ENCODE measurements at regions of chr22 and their contacts with region 1.

Region 1: DNA sequence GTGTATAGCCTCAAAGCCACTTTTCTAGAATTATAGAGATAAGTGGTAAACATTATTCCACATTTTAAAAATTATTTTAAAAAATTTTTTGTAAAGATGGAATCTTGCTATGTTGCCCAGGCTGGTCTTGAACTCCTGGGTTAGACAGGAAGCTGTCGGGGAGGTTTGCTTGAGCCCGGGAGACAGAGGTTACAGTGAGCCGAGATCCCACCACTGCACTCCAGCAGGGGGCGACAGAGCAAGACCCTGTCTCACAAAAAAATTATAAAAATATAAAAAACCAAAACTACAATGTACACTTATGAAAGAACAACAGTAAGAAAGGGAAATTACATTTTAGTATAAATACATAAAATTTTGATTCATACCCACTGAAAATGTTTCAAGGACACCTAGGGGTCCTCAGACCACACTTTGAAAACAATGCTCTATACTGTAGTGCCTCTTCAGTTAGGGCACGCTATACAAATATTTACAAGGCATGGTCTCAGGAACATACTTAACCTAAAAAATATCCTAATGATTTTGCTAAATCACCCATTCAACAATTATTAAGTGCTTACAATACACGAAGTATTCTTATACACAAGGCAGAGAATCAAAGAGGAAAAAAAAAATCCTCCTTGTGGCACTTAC is 111.2 kb downstream of the MRTFA start:
- DNase-seq: no peak
- H3K4me3 ChIP-seq: no peak overlapping the region
- H3K27ac ChIP-seq: no peak overlapping the region
- H3K4me1 ChIP-seq: peaks cover 9% of the 10 kb centered on the region
- H3K27me3 ChIP-seq: no peaks in the 10 kb centered on the region
- CTCF ChIP-seq: peak; percentile 19 to 59 (median 29)
- POLR2A ChIP-seq: no peak

Region 2: GRCh38 chr22:40009953-40010671 is 515.3 kb before region 1 on chr22:
- intact Hi-C with region 1: loop called (anchors 5 kb)
- DNase-seq: no peak
- H3K4me3 ChIP-seq: no peak overlapping the region
- H3K27ac ChIP-seq: no peak overlapping the region
- H3K4me1 ChIP-seq: peaks cover 25% of the 10 kb centered on the region
- H3K27me3 ChIP-seq: no peaks in the 10 kb centered on the region
- CTCF ChIP-seq: no peak
- POLR2A ChIP-seq: no peak

Measured in vagina (tissue), 2 donors.